ENCODE measurements at regions of chr12 and their contacts with region 1.

Region 1: DNA sequence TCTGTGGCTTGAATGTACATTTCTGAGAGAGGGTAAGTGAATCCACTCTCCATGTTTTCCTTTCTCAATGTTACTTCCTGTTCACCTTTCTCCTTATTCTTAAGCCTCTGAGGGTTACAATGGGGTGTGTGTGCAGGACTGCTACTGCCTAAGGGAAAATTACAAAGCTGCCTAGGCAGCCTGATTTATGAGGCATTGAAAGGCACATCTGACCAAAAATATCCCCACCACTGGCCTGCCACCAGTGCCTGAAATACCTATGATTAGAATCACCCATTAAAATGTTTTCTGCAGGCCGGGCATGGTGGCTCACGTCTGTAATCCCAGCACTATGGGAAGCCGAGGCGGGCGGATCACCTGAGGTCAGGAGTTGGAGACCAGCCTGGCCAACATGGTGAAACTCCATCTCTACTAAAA is 98.1 kb upstream of the USP44 start:
- DNase-seq: peak; percentile 98
- ATAC-seq: peak; percentile 89
- H3K4me3 ChIP-seq: no peak overlapping the region
- H3K27ac ChIP-seq: peak overlapping the region; percentile 90
- H3K4me1 ChIP-seq: peaks cover 48% of the 10 kb centered on the region
- H3K27me3 ChIP-seq: no peaks in the 10 kb centered on the region
- CTCF ChIP-seq: no peak

Region 2: GRCh38 chr12:95169368-95169767 is 480.0 kb before region 1 on chr12:
- CTCF ChIA-PET with region 1: no interaction called
- POLR2A ChIA-PET with region 1: no interaction called
- intact Hi-C with region 1: no loop called
- DNase-seq: peak; percentile 80
- ATAC-seq: peak; percentile 100
- H3K4me3 ChIP-seq: no peak overlapping the region
- H3K27ac ChIP-seq: 0 out of 2 replicates have a peak overlapping the region, but pooled peaks have one; percentile 5
- H3K4me1 ChIP-seq: peaks cover 15% of the 10 kb centered on the region; the same call in 1 of the 2 replicates
- H3K27me3 ChIP-seq: no peaks in the 10 kb centered on the region
- CTCF ChIP-seq: no peak

Region 3: DNA sequence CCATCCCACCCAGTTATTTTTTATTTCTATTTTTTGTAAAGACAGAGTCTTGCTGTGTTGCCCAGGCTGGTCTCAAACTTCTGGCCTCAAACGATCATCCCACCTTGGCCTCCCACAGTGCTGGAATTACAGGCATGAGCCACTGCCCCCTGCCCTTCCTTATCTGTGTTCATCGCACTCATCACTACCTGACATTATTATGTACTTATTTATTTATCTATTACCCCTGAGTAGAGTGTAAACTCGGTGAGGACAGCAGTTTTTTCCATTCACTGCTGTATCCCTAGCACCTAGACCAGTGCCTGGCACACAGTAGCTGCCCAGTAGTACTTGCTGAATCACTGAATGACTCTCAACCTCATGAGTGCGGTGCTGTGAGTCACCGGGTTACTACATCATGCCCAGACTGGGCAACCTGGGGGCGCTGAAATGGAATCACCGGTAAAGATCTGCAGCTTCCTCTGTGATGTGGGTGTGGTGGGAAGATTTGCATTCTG is 16.3 kb before region 1 on chr12:
- CTCF ChIA-PET with region 1: no interaction called
- POLR2A ChIA-PET with region 1: no interaction called
- intact Hi-C with region 1: loop called (anchors 2 kb)
- DNase-seq: peak; percentile 98
- ATAC-seq: peak; percentile 93
- H3K4me3 ChIP-seq: no peak overlapping the region
- H3K27ac ChIP-seq: peak overlapping the region; percentile 91
- H3K4me1 ChIP-seq: peaks cover 38% of the 10 kb centered on the region
- H3K27me3 ChIP-seq: no peaks in the 10 kb centered on the region
- CTCF ChIP-seq: no peak; the same call in 1 of the 2 replicates

Region 4: DNA sequence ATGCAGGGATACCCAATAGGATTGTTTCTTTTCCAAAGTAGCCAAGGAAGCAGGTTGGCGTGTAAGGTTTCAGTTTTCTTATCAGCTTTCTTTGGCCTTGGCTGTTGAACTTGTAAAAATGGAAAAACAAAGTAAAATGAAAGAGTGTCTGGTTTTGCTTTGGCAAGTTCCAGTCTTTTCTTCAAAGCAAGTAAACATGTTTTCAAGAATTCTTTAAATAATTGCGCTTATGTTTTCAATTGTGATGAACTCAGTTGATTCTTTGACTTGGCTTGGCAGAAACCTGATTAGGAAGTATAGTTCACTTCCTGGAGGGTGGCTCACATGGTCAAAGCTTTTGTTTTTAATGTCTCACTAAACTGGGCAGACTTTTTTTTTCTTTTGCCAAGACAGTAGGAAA is 14.1 kb after region 1 on chr12:
- CTCF ChIA-PET with region 1: no interaction called
- POLR2A ChIA-PET with region 1: no interaction called
- intact Hi-C with region 1: no loop called
- DNase-seq: no peak
- ATAC-seq: no peak
- H3K4me3 ChIP-seq: no peak overlapping the region
- H3K27ac ChIP-seq: no peak overlapping the region
- H3K4me1 ChIP-seq: no peaks in the 10 kb centered on the region
- H3K27me3 ChIP-seq: no peaks in the 10 kb centered on the region
- CTCF ChIP-seq: no peak

Measured in PC-3 (cell line).